ENCODE measurements at regions of chr1 and their contacts with region 1.

Region 1: GRCh38 chr1:241627453-241628259 is 12.5 kb downstream of the CHML start:
- DNase-seq: peak; percentile 46
- H3K4me3 ChIP-seq: no peak overlapping the region
- H3K27ac ChIP-seq: no peak overlapping the region
- H3K27me3 ChIP-seq: no peaks in the 10 kb centered on the region
- CTCF ChIP-seq: peak; percentile 79

Region 2: DNA sequence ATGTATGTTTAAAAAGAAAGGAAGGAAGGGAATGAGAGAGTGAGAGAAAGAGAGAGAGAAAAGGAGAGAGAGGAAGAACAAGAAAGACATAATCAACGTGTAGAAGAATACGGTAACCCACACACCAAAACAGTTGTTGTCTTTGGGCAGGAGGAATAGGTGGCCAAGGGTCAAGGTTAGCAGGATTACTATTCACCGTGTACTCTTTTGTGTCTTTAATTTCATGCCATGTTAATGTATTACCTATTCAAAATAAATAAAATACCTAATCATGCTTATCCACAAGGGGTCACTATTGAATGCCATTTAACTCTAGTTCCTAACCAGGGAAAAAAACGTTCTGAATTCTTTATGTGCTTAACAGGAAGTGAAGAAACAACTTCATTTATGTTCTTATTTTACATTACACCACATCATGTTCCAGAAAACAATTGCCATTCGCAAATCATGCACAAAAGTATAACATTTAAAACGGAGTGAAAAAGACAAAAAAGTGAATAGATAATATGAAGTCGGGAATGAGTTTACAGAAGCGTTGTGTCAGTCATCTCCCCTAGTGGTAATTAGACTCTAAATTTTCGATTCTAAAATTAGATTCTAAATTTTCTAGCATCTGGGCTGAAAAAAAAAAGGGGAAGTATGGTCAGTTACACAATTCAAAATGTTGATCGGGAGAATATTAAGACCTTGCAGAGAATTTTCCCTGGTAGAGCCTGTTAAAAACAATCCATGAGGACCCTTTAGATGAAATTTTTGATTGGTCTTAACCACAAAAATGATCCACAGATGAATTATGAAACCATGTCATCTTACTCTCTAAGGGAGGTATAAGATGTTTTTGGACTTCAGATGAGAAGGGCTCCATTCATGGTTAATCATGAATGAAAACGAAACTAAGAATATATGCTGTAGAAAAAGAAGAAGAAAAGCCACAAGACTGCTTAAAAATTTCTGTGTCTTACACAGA is 96.2 kb before region 1 on chr1:
- CTCF ChIA-PET with region 1: interaction called, 10 read pairs
- POLR2A ChIA-PET with region 1: no interaction called
- DNase-seq: peak; percentile 33
- H3K4me3 ChIP-seq: peak overlapping the region; percentile 59
- H3K27ac ChIP-seq: no peak overlapping the region
- H3K27me3 ChIP-seq: peaks cover 10% of the 10 kb centered on the region
- CTCF ChIP-seq: peak; percentile 59

Region 3: GRCh38 chr1:241617426-241617825 is 10.2 kb before region 1 on chr1:
- CTCF ChIA-PET with region 1: interaction called, 103 read pairs
- POLR2A ChIA-PET with region 1: no interaction called
- DNase-seq: no peak
- H3K4me3 ChIP-seq: no peak overlapping the region
- H3K27ac ChIP-seq: no peak overlapping the region
- H3K27me3 ChIP-seq: no peaks in the 10 kb centered on the region
- CTCF ChIP-seq: no peak

Region 4: DNA sequence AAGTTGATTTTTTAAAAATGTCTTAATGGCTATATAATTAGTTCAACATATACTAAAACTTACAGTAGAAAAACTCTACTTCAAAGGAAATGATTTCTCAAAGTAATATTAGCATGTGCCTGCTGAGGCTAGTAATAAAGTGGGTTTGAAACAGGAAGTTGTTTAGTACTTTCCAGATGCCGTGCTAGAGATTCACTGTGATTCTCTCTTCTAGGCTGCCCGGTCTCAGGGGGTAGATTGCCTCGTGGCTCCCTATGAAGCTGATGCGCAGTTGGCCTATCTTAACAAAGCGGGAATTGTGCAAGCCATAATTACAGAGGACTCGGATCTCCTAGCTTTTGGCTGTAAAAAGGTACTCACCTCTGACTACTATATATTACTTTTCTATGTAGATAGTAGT is 229.5 kb after region 1 on chr1:
- CTCF ChIA-PET with region 1: no interaction called
- POLR2A ChIA-PET with region 1: no interaction called
- DNase-seq: no peak
- H3K4me3 ChIP-seq: no peak overlapping the region
- H3K27ac ChIP-seq: no peak overlapping the region
- H3K27me3 ChIP-seq: no peaks in the 10 kb centered on the region
- CTCF ChIP-seq: no peak

Measured in AG04450 (cell line).